H1 (cell line): ENCODE measurements at regions of chr2 and their contacts with region 1.

Region 1: GRCh38 chr2:135997380-135997779 is 12.0 kb upstream of the DARS1 start:
- DNase-seq: peak; percentile 51 to 87
- H3K4me3 ChIP-seq: no peak overlapping the region
- H3K27ac ChIP-seq: no peak overlapping the region
- H3K4me1 ChIP-seq: peaks cover 0 to 4% (median under 1%) of the 10 kb centered on the region in 4 experiments; a peak in 2 of 7 replicates
- H3K27me3 ChIP-seq: no peaks in the 10 kb centered on the region
- CTCF ChIP-seq: peak; percentile 76 to 83 (median 77)
- EP300 ChIP-seq: no peak
- POLR2A ChIP-seq: no peak
- RAD21 ChIP-seq: peak; percentile 90 to 94

Region 2: GRCh38 chr2:135762022-135762421 is 235.4 kb before region 1 on chr2:
- CTCF ChIA-PET with region 1: no interaction called
- POLR2A ChIA-PET with region 1: no interaction called
- DNase-seq: no peak
- H3K4me3 ChIP-seq: no peak overlapping the region
- H3K27ac ChIP-seq: no peak overlapping the region
- H3K4me1 ChIP-seq: no peaks in the 10 kb centered on the region
- H3K27me3 ChIP-seq: no peaks in the 10 kb centered on the region
- CTCF ChIP-seq: no peak
- EP300 ChIP-seq: no peak
- POLR2A ChIP-seq: no peak
- RAD21 ChIP-seq: no peak

Region 3: GRCh38 chr2:136013955-136014354 is 16.6 kb after region 1 on chr2:
- CTCF ChIA-PET with region 1: interaction called, 14 read pairs
- POLR2A ChIA-PET with region 1: no interaction called
- DNase-seq: no peak
- H3K4me3 ChIP-seq: no peak overlapping the region
- H3K27ac ChIP-seq: no peak overlapping the region
- H3K4me1 ChIP-seq: peaks cover 2 to 13% (median 5%) of the 10 kb centered on the region in 4 experiments; a peak in 4 of 7 replicates
- H3K27me3 ChIP-seq: no peaks in the 10 kb centered on the region
- CTCF ChIP-seq: no peak
- EP300 ChIP-seq: no peak
- POLR2A ChIP-seq: no peak
- RAD21 ChIP-seq: peak; percentile 11 to 13; a peak in 2 of 4 replicates

Region 4: DNA sequence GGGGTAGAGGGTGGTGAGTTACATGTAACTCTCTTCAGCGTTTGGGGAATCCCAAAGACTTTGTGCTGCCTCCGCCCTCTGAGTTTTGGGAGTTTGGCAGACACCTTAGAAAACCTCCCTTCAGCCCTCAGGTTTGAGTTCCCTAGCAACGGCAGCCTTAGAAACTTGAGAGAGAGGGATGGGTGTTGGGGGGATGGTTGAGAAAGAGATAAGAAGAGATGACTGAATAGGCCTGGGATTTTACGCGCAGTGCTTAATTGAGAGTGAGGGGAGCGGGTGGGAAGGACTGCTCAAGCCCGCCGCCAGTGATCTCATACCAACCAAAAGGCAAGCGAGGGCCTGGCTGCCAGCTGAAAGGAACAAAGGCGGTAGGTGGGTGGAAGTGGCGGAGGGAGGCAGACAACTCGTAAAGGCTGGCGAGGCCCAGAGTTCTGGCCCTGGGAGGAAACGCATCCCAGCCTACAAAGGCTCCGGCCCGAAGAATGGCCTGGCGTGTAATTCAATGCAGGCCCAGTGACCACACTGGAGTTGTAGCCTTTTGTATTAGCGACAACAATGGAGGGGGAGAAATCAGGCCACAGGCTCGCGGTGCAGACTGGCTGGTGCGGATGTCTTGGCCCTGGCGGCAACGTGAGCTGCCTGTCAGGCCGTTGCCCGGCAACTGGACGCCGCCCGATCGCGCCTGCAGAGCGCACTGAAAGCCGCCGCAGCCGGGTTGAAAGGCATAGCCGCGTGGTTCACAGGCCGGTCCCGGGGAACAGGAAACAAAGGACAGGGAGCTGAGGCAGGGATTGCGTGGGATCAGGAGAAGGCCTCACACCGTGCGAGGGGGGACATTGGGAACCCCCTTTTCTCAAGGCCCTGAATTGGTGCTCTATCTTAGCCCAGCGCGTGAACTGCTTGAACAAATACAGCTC is 27.9 kb after region 1 on chr2:
- CTCF ChIA-PET with region 1: interaction called, 15 read pairs
- POLR2A ChIA-PET with region 1: interaction called, 7 read pairs
- DNase-seq: peak; percentile 70 to 91
- H3K4me3 ChIP-seq: peak overlapping the region; percentile 37 to 56 (median 48)
- H3K27ac ChIP-seq: peak overlapping the region; percentile 62
- H3K4me1 ChIP-seq: peaks cover 0 to 11% (median 3%) of the 10 kb centered on the region in 4 experiments; a peak in 4 of 7 replicates
- H3K27me3 ChIP-seq: peaks cover 0 to 4% (median 2%) of the 10 kb centered on the region in 4 experiments; a peak in 1 of 7 replicates
- CTCF ChIP-seq: no peak
- EP300 ChIP-seq: no peak
- POLR2A ChIP-seq: peak in 1 of 2 experiments; percentile 77; a peak in 2 of 3 replicates
- RAD21 ChIP-seq: 0 out of 4 replicates have a peak, but pooled peaks of 1 of the 2 experiments have one; percentile 2

Region 5: GRCh38 chr2:136131961-136132824 is 134.8 kb after region 1 on chr2:
- CTCF ChIA-PET with region 1: interaction called, 12 read pairs
- POLR2A ChIA-PET with region 1: no interaction called
- DNase-seq: no peak
- H3K4me3 ChIP-seq: no peak overlapping the region
- H3K27ac ChIP-seq: no peak overlapping the region
- H3K4me1 ChIP-seq: no peaks in the 10 kb centered on the region
- H3K27me3 ChIP-seq: peaks cover 0 to 1% (median 0%) of the 10 kb centered on the region in 4 experiments; a peak in 1 of 7 replicates
- CTCF ChIP-seq: no peak
- EP300 ChIP-seq: no peak
- POLR2A ChIP-seq: no peak
- RAD21 ChIP-seq: no peak

Region 6: GRCh38 chr2:136384531-136385303 is 387.3 kb after region 1 on chr2:
- CTCF ChIA-PET with region 1: interaction called, 20 read pairs
- POLR2A ChIA-PET with region 1: no interaction called
- DNase-seq: no peak
- H3K4me3 ChIP-seq: no peak overlapping the region
- H3K27ac ChIP-seq: no peak overlapping the region
- H3K4me1 ChIP-seq: no peaks in the 10 kb centered on the region
- H3K27me3 ChIP-seq: no peaks in the 10 kb centered on the region
- CTCF ChIP-seq: peak; percentile 69 to 87 (median 77)
- EP300 ChIP-seq: no peak
- POLR2A ChIP-seq: no peak
- RAD21 ChIP-seq: peak; percentile 92 to 95

Region 7: DNA sequence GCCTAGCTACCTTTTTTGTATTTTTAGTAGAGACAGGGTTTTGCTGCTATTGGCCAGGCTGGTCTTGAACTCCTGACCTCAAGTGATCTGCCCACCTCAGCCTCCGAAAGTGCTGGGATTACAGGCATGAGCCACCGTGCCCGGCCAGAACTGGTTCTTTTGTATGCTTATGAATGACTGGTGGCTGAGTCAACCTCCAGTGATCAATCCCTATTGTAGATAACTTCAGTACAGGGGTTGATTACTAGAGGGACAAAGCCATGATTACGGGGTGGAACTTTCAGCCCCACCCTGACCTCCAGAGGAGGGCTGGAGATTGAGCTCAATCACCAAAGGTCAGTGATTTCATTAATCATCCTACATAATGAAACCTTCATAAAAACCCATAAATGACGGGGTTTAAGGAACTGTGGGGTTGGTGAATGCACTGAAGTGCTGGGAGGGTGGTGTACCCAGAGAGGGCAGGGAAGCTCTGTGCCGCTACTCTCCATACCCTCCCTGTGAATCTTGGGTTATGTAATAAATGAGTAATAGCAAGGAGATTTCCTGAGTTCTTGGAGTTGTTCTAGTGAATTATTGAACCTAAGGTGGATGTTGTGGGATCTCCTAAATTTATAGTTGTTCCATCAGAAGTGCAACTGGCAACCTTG is 402.4 kb after region 1 on chr2:
- CTCF ChIA-PET with region 1: no interaction called
- POLR2A ChIA-PET with region 1: no interaction called
- DNase-seq: no peak
- H3K4me3 ChIP-seq: no peak overlapping the region
- H3K27ac ChIP-seq: no peak overlapping the region
- H3K4me1 ChIP-seq: no peaks in the 10 kb centered on the region
- H3K27me3 ChIP-seq: no peaks in the 10 kb centered on the region
- CTCF ChIP-seq: no peak
- EP300 ChIP-seq: no peak
- POLR2A ChIP-seq: no peak
- RAD21 ChIP-seq: no peak